ENCODE measurements at regions of chr4 and their contacts with region 1.

Region 1: GRCh38 chr4:79294064-79294463 is 31.8 kb downstream of the NAA11 start:
- DNase-seq: no peak
- H3K4me3 ChIP-seq: no peak overlapping the region
- CTCF ChIP-seq: no peak

Region 2: GRCh38 chr4:79209822-79210635 is 84.0 kb before region 1 on chr4:
- in situ Hi-C with region 1: loop called (anchors 5 kb)
- DNase-seq: no peak
- H3K4me3 ChIP-seq: no peak overlapping the region
- CTCF ChIP-seq: no peak

Region 3: DNA sequence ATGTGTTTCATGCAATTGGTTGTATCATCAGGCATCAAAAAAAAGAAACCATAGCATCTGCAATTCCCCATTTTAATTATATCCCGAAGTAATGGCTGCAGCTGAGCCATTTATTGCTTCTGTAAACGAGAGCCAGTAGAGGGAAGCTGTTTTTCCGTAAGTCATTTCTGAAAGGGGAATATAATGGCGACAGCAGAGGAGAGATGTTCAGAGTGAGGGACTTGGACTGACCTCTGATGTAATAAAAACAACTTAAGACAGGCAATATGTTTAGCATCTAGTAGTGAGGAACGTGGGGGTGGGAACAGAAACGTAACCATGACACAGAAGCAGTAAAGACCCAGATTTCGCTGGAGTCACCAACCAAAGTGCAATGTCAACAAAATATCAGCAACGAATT is 63.3 kb after region 1 on chr4:
- in situ Hi-C with region 1: no loop called
- DNase-seq: no peak
- H3K4me3 ChIP-seq: no peak overlapping the region
- CTCF ChIP-seq: no peak

Region 4: DNA sequence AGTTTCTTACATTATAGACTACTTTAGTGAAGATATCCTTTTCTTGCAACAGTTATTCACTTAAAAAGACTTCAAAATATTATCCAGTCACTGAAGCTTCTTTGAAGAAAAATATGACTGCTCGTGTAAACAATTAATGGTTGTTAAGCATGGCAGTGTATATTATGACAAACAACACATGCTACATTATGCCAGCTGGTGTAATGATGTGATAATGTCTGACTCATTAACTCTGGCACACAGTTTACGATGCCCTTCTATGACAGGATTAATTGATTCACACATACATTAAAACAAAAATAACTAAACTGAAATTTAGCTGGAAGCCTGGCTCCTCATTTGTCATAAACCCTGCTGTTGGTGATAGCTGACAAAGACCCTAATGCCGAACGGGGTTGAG is 91.6 kb after region 1 on chr4:
- in situ Hi-C with region 1: loop called (anchors 5 kb)
- DNase-seq: no peak
- H3K4me3 ChIP-seq: no peak overlapping the region
- CTCF ChIP-seq: no peak

Measured in astrocyte of the cerebellum (primary cell).